Endothelial cell of umbilical vein (primary cell): ENCODE measurements at regions of chr15 and their contacts with region 1.

Region 1: GRCh38 chr15:90086868-90087268 is 15.4 kb downstream of the IDH2 start:
- DNase-seq: peak; percentile 50
- H3K4me3 ChIP-seq: no peak overlapping the region
- H3K27ac ChIP-seq: no peak overlapping the region
- H3K4me1 ChIP-seq: no peaks in the 10 kb centered on the region
- H3K27me3 ChIP-seq: no peaks in the 10 kb centered on the region
- CTCF ChIP-seq: peak; percentile 83 to 91
- POLR2A ChIP-seq: no peak

Region 2: DNA sequence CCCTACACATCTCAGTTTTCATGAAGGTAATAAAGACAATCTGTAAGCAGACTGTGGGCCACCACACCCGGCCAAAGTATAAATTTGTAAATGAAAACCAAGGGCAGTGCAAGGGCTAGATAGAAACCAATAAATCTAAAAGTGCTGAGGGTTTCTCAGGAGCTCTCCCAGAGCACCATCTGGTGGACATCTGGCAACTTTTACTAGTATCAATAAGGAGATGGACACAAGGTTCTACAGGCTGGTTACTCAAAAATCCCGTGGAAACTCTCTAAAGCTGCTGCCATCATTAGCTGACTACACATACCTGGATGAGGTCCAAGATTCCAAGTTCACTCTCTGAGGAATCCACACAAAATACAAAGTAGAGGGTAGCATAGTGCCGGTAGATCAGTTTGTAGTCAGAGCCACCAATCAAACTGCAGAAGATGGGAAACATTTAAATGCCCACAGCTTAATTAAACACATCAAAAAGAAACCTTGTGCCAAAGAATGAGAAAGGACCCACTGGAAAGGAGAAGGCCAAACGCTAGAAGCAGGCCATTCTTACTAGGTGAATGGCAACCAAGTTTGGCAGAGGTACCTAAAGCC is 198.6 kb before region 1 on chr15:
- CTCF ChIA-PET with region 1: interaction called, 24 read pairs
- POLR2A ChIA-PET with region 1: no interaction called
- dilution Hi-C with region 1: no loop called
- intact Hi-C with region 1: no loop called
- DNase-seq: peak; percentile 56
- H3K4me3 ChIP-seq: no peak overlapping the region
- H3K27ac ChIP-seq: no peak overlapping the region
- H3K4me1 ChIP-seq: peaks cover 5% of the 10 kb centered on the region
- H3K27me3 ChIP-seq: no peaks in the 10 kb centered on the region
- CTCF ChIP-seq: peak; percentile 38 to 55
- POLR2A ChIP-seq: no peak

Region 3: DNA sequence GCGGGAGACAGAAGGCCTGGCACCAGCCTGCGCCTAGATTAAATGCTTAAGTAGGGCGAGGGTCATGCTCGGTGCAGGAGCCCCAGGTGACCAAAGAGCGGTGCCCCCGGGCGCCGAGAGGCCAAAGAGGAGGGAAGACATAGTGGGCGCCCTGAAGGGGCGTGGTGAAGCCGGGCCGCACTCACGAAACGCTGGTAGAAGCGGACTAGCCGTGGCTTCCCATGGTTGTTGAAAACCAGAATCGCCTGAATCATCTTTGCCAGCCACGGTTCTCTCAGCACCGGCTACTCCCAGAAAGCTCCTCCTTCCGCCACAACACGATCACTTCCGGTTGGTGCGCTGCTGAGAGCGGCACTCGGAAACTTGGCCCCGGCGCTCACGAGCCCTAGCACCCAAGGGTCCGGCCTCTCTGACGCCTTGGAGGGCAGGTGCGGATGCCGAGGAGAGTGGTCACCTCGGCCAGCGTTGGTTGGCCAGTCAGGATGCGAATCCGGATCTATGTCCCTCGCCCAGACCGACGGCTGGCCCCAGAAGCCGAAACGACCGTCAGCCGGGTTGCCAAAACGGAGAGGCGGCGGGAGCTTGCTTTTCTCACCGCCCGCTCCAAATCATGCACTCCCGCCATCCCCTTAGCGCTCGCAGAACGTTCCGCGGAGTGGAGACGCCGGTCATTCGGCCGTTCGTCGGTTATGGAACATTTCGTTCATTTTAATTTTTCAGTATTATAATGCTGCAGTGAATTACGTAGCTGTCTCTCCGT is 193.0 kb before region 1 on chr15 and contains the start of gene AP3S2:
- CTCF ChIA-PET with region 1: interaction called, 38 read pairs
- POLR2A ChIA-PET with region 1: no interaction called
- dilution Hi-C with region 1: no loop called
- intact Hi-C with region 1: loop called (anchors 1 kb)
- DNase-seq: peak; percentile 92
- H3K4me3 ChIP-seq: peak within 1 kb of the TSS; percentile 77 to 96 (median 86)
- H3K27ac ChIP-seq: peak within 1 kb of the TSS; percentile 69
- H3K4me1 ChIP-seq: peaks cover 5% of the 10 kb centered on the region
- H3K27me3 ChIP-seq: no peaks in the 10 kb centered on the region
- CTCF ChIP-seq: no peak
- POLR2A ChIP-seq: peak; percentile 85
- total RNA-seq, gene AP3S2: 20.4 and 31.1 TPM in 2 replicates

Region 4: DNA sequence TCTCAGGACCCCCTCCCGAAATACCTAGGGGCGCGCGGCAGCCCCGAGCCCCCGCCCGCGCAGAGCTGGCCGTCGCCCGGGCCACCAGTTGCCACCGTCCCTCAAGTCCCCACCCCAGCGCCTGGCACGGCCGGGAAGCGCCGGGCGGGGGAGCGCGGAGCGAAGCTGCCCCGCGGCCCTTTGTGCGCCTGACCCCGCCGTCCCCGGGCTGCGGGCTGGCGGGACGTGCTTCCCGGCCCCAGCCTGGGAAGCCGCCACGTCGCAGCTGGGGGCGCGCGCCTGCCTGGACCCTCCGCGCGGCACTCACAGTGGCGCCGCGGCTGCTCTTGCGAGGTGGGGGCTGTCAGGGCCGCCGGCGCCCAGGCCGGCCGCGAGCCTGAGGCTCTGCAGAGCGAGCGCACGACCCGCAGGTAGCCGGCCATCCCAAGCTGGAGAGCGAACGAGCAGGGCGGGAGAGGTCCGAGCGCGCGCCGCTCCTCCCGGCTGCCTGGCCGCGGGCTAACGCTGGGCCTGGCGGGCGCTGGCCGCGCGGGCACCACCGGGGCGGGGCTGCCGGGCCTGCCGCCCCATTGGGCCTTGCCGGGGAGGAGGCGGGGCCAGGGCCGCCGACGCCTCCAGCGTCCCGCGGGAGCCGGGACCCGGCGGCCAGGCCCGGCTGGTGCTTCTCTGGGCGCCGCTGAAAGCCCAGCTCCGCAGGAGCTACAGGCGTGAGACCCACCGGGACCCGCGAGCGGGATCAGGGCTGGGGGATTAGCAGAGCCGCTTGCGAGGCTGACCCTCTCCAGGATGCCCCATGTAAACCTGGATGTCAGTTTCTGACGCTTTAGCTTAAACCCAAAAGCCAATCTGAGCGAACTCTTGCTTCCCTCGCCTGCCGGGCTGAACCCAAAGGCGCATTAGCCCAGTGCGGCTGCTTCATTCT is 15.4 kb after region 1 on chr15 and contains the start of gene IDH2:
- CTCF ChIA-PET with region 1: interaction called, 25 read pairs
- POLR2A ChIA-PET with region 1: interaction called, 5 read pairs
- dilution Hi-C with region 1: no loop called
- intact Hi-C with region 1: no loop called
- DNase-seq: peak; percentile 87
- H3K4me3 ChIP-seq: peak within 1 kb of the TSS; percentile 72 to 83 (median 76)
- H3K27ac ChIP-seq: peak within 1 kb of the TSS; percentile 73
- H3K4me1 ChIP-seq: peaks cover 26% of the 10 kb centered on the region
- H3K27me3 ChIP-seq: no peaks in the 10 kb centered on the region
- CTCF ChIP-seq: no peak
- POLR2A ChIP-seq: peak; percentile 95
- total RNA-seq, gene IDH2: 127 and 133 TPM in 2 replicates